HEK293T (cell line): ENCODE measurements at regions of chr15 and their contacts with region 1.

Region 1: GRCh38 chr15:41774062-41774881 is at the start of gene MAPKBP1:
- DNase-seq: peak; percentile 87

Region 2: DNA sequence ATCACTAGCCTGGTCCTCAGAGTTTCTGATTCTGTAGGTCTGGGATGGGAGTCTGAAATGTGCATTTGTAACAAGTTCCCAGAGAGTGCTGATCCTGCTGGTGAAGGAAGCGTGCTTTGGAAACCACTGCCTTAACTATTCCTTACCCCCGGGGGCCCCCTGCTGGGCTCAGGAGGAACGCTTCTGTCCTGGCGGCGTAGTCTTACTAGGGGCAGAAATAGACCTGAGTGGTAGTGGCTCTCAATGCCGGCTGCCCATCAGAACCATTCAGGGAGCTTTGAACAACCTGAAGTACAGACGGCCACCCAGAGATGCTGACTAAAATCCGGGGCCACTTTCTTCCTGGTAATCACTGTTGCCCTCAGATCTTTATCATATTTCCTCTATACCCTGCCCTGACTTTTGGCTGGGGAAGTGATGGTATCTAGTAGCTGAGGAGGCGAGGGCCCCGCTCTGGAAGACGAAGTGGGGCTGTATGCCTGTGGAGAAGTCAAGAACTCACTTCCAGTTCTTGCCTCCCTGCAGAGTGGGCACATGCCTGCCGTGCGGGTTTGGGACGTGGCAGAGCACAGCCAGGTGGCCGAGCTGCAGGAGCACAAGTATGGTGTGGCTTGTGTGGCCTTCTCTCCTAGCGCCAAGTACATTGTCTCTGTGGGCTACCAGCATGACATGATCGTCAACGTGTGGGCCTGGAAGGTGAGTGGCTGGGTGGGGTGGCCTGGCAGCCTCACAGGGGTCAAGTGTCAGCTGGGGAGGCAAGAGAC is 37.3 kb after region 1 on chr15:
- CTCF ChIA-PET with region 1: interaction called, 51 read pairs
- POLR2A ChIA-PET with region 1: interaction called, 5 read pairs
- DNase-seq: peak; percentile 74

Region 3: GRCh38 chr15:41904541-41905005 is 130.3 kb after region 1 on chr15:
- CTCF ChIA-PET with region 1: interaction called, 10 read pairs
- POLR2A ChIA-PET with region 1: no interaction called
- DNase-seq: peak; percentile 68